Naive thymus-derived CD4-positive, alpha-beta T cell (primary cell): ENCODE measurements at regions of chr9 and their contacts with region 1.

Region 1: DNA sequence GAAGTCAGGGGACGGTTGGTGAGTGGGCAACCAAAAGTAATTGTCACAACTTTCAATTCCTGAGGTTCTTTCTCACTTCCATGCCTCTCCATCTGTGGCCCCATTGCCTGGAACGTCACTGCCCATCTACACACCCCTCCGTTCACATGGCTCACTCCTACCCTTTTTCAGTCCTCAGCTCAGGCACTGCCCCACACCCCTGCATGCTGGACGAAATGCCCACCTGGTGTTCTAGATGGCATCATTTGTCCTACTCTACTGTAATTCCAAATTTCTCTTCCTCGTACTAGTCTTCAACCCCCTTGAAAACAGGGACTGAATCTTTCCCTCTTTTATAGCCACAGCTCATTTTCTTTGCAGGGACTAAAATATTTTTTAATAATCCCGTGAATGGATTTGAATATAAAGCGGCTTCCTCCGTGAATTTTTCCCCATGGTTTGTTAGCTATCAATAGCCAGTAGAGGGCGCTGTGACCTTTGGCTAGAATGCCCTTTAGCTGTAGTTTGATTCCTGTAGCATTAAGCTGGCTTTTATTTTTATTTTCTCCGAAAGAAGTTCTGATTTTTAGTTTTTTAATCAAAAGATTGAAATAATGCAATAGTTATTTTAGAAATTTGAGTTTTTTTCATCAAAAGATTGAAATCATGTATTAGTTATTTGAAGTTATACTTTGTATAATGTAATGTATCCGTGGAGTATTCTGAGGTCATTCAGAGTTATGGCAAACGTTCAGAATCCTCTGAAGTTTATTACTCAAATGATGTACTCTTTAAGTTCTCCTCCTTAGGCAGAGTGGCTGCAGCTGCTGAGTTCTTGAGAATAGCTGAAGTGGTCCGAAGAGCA is 232.1 kb downstream of the SH3GL2 start:
- DNase-seq: peak in 3 of 9 donors; percentile 1 to 25 (median 2)
- ATAC-seq: no peak
- H3K4me3 ChIP-seq: no peak overlapping the region
- H3K4me3 Mint-ChIP-seq: no peak overlapping the region
- H3K27ac ChIP-seq: no peak overlapping the region
- H3K27ac Mint-ChIP-seq: no peak overlapping the region
- H3K4me1 ChIP-seq: no peaks in the 10 kb centered on the region
- H3K4me1 Mint-ChIP-seq: no peaks in the 10 kb centered on the region
- H3K27me3 ChIP-seq: no peaks in the 10 kb centered on the region
- H3K27me3 Mint-ChIP-seq: no peaks in the 10 kb centered on the region

Region 2: GRCh38 chr9:18208154-18209059 is 397.5 kb after region 1 on chr9:
- CTCF ChIA-PET with region 1: no interaction called
- POLR2A ChIA-PET with region 1: no interaction called
- intact Hi-C with region 1: loop called in 1 of 2 experiments (anchors 1 kb)
- DNase-seq: no peak
- ATAC-seq: no peak
- H3K4me3 ChIP-seq: no peak overlapping the region
- H3K4me3 Mint-ChIP-seq: no peak overlapping the region
- H3K27ac ChIP-seq: no peak overlapping the region
- H3K27ac Mint-ChIP-seq: no peak overlapping the region
- H3K4me1 ChIP-seq: no peaks in the 10 kb centered on the region
- H3K4me1 Mint-ChIP-seq: no peaks in the 10 kb centered on the region
- H3K27me3 ChIP-seq: no peaks in the 10 kb centered on the region
- H3K27me3 Mint-ChIP-seq: peaks cover 0 to 12% (median 0%) of the 10 kb centered on the region in 5 donors

Region 3: DNA sequence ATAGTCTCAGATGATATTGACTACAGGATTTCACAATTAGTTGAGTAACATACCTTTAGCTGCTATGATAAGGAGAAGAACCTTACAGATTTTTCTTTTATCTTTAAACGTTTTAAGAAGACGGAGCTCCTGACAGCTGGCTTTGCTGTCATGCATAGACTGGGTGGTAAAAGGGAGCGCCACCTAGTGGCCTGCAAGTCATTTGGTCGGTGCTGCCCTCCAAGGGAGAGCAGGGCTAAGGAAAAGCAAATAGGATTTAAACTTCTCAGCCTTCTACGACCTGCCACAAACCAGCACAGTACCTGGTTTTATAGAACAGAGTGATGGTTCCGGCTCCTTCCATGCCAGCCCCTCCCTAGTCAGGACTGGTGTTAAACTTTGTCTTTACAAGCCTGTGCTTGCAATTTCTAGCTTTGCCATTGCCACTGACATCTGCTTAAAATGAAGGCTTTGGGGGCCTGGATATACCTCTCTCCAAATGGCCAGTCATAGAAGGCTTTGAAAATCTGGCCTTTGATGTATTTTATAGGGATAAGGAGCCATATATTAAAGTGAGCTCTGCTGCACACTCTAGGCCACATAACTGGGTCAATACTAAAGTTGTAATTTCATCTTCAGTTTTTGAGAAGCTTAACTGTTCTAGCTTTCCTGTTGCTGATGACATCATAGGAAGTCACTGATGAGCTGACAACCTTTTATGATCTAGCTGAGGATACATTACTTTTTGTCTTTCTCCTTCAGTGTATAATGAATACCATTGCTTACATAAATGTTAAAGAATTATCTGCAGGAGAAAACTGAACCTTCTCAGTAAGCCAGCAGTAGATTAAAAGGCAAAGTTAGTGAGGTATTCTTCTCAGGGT is 631.9 kb after region 1 on chr9:
- CTCF ChIA-PET with region 1: no interaction called
- POLR2A ChIA-PET with region 1: no interaction called
- intact Hi-C with region 1: loop called in 1 of 2 experiments (anchors 10 kb)
- DNase-seq: peak in 5 of 9 donors; percentile 12 to 47 (median 25)
- ATAC-seq: peak; percentile 64
- H3K4me3 ChIP-seq: no peak overlapping the region
- H3K4me3 Mint-ChIP-seq: no peak overlapping the region
- H3K27ac ChIP-seq: no peak overlapping the region
- H3K27ac Mint-ChIP-seq: no peak overlapping the region
- H3K4me1 ChIP-seq: no peaks in the 10 kb centered on the region
- H3K4me1 Mint-ChIP-seq: peaks cover 0 to 5% (median 0%) of the 10 kb centered on the region in 7 donors
- H3K27me3 ChIP-seq: no peaks in the 10 kb centered on the region
- H3K27me3 Mint-ChIP-seq: peaks cover 12 to 28% (median 16%) of the 10 kb centered on the region in 5 donors

Region 4: DNA sequence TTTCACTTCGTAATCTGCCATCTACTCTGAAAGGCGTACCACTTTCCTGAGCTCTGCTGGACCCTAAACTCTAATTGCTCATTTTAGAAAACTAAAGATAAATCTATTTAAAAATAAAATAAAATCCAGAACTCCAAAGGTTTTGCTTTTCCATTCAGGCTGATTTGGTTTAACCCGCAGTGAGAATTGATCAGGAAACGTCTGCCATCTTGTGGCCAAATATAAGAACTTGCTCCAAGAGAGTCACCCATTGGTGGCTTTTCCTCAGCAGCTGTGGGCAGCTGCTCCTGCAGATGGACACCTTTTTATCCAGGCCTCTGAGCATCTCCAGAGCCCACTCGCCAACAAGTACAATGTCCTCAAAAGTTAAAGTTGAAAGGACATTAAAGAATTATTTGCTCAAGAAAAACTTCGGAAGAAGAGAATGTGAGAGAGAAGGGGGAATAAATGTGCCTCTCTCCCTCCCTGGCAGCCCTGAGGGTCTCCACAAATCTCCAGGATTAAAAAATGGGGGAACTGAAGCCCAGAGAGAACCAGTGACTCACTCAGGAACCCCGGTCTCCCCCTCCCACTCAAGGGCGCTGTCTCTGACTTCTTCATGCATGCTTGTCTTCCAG is 1218.0 kb after region 1 on chr9:
- CTCF ChIA-PET with region 1: no interaction called
- POLR2A ChIA-PET with region 1: no interaction called
- intact Hi-C with region 1: loop called in 1 of 2 experiments (anchors 2 kb)
- DNase-seq: peak in 5 of 9 donors; percentile 17 to 37 (median 34)
- ATAC-seq: peak; percentile 54
- H3K4me3 ChIP-seq: no peak overlapping the region
- H3K4me3 Mint-ChIP-seq: no peak overlapping the region
- H3K27ac ChIP-seq: no peak overlapping the region
- H3K27ac Mint-ChIP-seq: no peak overlapping the region
- H3K4me1 ChIP-seq: no peaks in the 10 kb centered on the region
- H3K4me1 Mint-ChIP-seq: peaks cover 0 to 8% (median 0%) of the 10 kb centered on the region in 7 donors
- H3K27me3 ChIP-seq: no peaks in the 10 kb centered on the region
- H3K27me3 Mint-ChIP-seq: peaks cover 11 to 19% (median 13%) of the 10 kb centered on the region in 5 donors